Activated naive CD4-positive, alpha-beta T cell treated with anti-CD3 and anti-CD28 coated beads for 36 hours (primary cell): ENCODE measurements at regions of chr16 and their contacts with region 1.

Region 1: DNA sequence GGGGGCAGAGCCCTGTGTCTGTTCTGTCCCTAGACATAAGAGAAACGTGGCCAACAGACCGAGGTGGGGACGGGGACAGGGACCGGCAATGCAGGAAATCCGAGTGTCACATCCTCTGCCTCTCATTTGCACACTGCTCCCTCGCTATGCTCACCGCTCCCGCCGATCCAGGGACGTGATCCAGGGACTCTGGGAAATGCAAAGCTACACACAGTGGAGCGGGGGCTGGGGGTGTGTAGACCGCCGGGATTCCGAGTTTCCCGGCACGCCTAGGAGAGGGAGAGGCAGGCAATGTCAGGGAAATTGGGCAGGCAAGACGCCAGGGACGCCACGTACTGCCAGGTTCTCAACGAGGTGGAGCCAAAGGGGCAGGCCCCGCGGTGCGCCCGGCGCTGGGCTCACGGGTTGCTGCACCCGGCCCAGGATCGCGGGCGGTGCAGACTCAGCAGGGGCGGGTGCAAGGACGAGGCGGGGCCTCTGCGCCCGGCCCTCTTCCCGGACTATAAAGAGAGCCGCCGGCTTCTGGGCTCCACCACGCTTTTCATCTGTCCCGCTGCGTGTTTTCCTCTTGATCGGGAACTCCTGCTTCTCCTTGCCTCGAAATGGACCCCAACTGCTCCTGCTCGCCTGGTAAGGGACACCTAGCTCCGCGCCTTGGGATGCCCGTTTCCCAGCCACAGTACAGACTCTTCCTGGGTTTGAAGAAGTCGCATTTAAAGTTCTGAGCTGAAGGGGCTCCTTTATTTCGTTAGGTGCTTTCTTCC is at the start of gene MT1X:
- DNase-seq: peak; percentile 95
- H3K4me3 Mint-ChIP-seq: peak within 1 kb of the TSS; percentile 92
- H3K27ac Mint-ChIP-seq: peak within 1 kb of the TSS; percentile 96
- H3K4me1 Mint-ChIP-seq: peaks cover 19% of the 10 kb centered on the region
- H3K27me3 Mint-ChIP-seq: no peaks in the 10 kb centered on the region
- total RNA-seq, gene MT1X: 49.9 to 57.9 TPM

Region 2: GRCh38 chr16:56356276-56357240 is 325.6 kb before region 1 on chr16:
- CTCF ChIA-PET with region 1: no interaction called
- intact Hi-C with region 1: loop called (anchors 1 kb)
- DNase-seq: peak; percentile 68
- H3K4me3 Mint-ChIP-seq: peak overlapping the region; percentile 74
- H3K27ac Mint-ChIP-seq: peak overlapping the region; percentile 86
- H3K4me1 Mint-ChIP-seq: peaks cover 31% of the 10 kb centered on the region
- H3K27me3 Mint-ChIP-seq: no peaks in the 10 kb centered on the region

Region 3: DNA sequence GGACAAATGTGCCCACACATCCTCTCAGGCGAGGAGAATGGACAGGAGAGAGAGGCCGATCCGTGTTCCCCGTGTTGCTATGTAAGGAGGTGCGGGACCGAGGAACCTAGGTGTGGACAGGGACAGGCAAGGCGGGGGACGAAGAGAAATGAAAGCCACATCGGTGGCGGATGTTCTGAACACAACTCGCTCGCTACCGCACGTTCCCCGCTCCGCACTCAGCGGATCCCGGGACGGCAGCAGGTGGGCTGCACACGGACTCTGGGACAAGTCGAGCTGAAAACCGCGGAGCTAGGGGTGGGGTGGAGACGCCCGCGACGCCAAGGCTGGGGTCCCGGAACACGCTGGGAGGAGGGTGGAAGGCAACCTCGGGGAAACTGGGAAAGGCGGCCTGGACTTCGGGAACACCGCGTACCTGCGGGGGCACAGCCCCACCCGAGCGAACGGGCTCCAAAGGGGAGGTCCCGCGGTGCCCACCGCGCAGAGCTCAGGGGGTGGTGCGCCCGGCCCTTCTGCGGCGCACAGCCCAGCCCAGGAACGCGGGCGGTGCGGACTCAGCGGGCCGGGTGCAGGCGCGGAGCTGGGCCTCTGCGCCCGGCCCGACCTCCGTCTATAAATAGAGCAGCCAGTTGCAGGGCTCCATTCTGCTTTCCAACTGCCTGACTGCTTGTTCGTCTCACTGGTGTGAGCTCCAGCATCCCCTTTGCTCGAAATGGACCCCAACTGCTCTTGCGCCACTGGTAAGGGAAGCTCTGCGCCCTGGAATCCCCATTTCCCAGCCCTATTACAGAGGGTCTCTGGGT is 56.8 kb before region 1 on chr16 and contains the start of gene MT1E:
- CTCF ChIA-PET with region 1: no interaction called
- intact Hi-C with region 1: loop called (anchors 1 kb)
- DNase-seq: peak; percentile 61
- H3K4me3 Mint-ChIP-seq: peak within 1 kb of the TSS; percentile 76
- H3K27ac Mint-ChIP-seq: no peak within 1 kb of the TSS
- H3K4me1 Mint-ChIP-seq: peaks cover 14% of the 10 kb centered on the region
- H3K27me3 Mint-ChIP-seq: peaks cover 25% of the 10 kb centered on the region
- total RNA-seq, gene MT1E: 12.2 to 12.4 TPM

Region 4: DNA sequence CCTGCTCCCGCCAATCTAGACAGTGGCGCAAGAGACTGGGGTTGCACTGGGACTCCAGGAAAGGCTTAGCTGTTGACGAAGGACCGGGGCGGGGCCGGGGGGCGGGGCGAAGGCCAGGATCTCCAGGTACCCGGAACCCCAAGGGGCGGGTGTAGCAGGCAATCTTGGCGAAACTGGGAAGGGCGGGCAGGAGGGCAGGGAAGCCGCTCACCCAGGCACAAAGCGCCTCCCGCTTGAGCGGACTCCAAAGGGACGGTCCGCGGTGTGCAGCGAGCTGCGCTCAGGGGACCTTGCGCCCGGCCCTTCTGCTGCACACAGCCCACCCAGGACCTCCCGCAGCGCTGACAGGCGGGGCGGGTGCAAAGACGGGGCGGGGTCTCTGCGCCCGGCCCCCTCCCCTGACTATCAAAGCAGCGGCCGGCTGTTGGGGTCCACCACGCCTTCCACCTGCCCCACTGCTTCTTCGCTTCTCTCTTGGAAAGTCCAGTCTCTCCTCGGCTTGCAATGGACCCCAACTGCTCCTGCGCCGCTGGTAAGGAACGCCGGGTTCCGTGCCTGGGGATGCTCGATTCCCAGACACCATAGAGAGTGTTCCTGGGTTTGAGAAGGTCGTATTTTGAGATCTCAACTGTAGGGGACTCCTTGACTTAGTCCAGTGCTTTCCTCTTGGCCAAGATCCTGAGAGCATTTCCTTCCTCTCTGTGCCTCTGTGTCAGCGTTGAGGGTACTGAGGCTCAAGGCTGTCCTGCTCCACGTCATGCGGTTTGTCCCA is 24.4 kb before region 1 on chr16 and contains the start of gene MT1F:
- CTCF ChIA-PET with region 1: interaction called, 3 read pairs
- intact Hi-C with region 1: loop called (anchors 1 kb)
- DNase-seq: peak; percentile 83
- H3K4me3 Mint-ChIP-seq: peak within 1 kb of the TSS; percentile 91
- H3K27ac Mint-ChIP-seq: peak within 1 kb of the TSS; percentile 41
- H3K4me1 Mint-ChIP-seq: peaks cover 18% of the 10 kb centered on the region
- H3K27me3 Mint-ChIP-seq: no peaks in the 10 kb centered on the region
- total RNA-seq, gene MT1F: 5.4 to 6.4 TPM

Region 5: DNA sequence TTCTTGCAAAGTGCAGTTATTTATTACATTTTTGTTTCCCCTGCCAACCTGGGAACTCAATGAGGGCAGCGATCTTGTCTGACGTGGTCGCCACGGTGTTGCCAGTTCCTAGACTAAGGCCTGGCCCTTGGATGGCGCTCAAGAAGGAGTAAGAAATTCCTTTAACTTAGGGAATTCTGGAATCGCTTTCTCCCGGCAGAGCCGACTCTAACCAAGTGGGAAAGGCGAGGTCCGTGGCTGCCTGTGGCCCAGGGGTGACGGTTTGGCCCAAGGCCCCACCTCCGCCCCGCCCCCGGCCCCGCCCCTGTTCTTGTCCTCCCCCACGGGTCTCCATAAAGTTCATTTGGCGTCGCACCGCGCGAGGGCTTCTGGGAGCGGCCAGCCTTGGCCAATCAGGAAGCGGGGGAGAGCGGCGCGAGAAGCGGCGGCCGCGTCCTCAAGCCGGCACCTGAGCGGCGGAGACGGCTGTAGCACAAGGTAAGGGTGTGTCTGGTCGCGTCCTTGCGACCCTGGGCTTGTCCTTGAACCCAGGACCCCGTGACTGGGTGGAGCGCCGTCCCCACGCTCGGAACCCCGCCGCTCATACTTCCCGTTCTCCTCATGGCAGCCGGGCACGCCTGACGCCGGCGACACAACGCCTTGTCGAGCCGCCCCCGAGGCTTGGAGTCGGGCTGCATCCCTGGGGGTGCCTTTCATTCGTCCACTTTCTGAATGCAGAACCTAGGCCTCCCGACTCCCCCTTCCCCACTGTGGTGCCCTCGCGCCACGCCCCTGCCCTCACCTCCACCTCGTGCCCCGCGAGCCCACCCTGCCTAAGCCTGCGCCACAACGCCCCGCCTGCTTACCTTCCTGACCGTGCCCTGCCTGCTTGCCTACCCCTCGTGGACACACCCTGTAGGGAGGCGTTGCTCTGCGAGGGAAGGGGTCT is 47.9 kb after region 1 on chr16 and contains the start of gene NUP93:
- CTCF ChIA-PET with region 1: no interaction called
- intact Hi-C with region 1: loop called (anchors 1 kb)
- DNase-seq: peak; percentile 94
- H3K4me3 Mint-ChIP-seq: no peak within 1 kb of the TSS
- H3K27ac Mint-ChIP-seq: peak within 1 kb of the TSS; percentile 78
- H3K4me1 Mint-ChIP-seq: peaks cover 14% of the 10 kb centered on the region
- H3K27me3 Mint-ChIP-seq: no peaks in the 10 kb centered on the region
- total RNA-seq, gene NUP93: 161 to 172 TPM